Mammary epithelial cell (primary cell): ENCODE measurements at regions of chr1 and their contacts with region 1.

Region 1: GRCh38 chr1:23539698-23540266 is 8.7 kb upstream of the E2F2 start:
- DNase-seq: peak; percentile 87
- H3K4me3 ChIP-seq: no peak overlapping the region
- H3K27ac ChIP-seq: no peak overlapping the region
- H3K4me1 ChIP-seq: peaks cover 8% of the 10 kb centered on the region
- H3K27me3 ChIP-seq: no peaks in the 10 kb centered on the region
- CTCF ChIP-seq: peak; percentile 95 to 98

Region 2: DNA sequence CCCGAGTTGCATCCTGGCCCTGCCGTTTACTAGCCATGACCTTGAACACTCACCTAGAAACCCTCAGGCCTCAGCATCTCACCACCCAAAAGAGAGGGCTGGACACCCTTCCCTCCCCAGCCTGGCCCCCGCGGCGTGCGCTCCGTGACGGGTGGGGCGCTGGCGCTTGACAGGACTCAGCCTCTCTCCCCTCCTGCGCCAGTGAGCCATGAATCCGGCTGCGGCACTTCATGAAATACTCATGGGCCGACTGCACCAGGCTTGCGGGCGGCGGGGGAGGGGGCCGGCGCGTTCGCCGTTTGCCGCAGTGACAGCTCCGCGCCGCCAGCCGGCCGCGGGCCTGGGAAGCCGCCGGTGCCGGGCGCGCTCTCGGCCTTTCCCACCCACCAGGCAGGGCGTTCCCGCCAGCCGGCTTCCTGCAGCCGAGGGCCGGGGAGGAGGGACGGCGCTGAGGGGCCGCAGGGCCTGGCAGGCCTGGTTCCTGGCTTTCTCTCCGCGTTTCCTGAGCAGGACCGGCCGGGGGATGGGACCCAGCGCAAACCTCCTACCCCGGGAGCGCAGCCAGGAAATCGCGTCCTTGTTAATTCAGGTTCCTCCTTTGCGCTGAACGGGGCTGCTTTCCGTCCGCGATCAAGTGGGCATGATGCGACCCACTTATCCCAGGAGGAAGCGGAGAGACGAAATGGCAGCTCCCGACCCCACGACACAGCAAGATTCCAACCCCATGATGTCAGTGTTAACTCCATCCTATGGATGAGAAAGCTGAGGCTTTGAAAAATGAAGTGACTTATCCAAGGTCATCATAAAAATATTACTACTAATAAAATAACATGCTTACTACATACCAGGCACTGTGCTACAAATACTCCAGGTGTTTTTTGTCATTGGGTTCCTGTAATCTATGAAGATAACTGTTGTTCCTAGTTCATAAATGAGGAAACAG is 362.1 kb before region 1 on chr1:
- CTCF ChIA-PET with region 1: no interaction called
- dilution Hi-C with region 1: no loop called
- in situ Hi-C with region 1: loop called in 1 of 2 experiments (anchors 25 kb)
- intact Hi-C with region 1: no loop called
- DNase-seq: peak; percentile 69
- H3K4me3 ChIP-seq: peak overlapping the region; percentile 41 to 64 (median 52)
- H3K27ac ChIP-seq: peak overlapping the region; percentile 45
- H3K4me1 ChIP-seq: peaks cover 12% of the 10 kb centered on the region
- H3K27me3 ChIP-seq: no peaks in the 10 kb centered on the region
- CTCF ChIP-seq: no peak

Region 3: GRCh38 chr1:23344111-23344986 is 195.4 kb before region 1 on chr1 and contains the start of gene HNRNPR:
- CTCF ChIA-PET with region 1: no interaction called
- dilution Hi-C with region 1: no loop called
- in situ Hi-C with region 1: no loop called
- intact Hi-C with region 1: loop called (anchors 5 kb)
- DNase-seq: peak; percentile 100
- H3K4me3 ChIP-seq: peak within 1 kb of the TSS; percentile 78 to 89 (median 83)
- H3K27ac ChIP-seq: peak within 1 kb of the TSS; percentile 88
- H3K4me1 ChIP-seq: peaks cover 15% of the 10 kb centered on the region
- H3K27me3 ChIP-seq: no peaks in the 10 kb centered on the region
- CTCF ChIP-seq: peak in 1 of 2 donors; percentile 13
- total RNA-seq, gene HNRNPR: 35.2 to 133 TPM

Region 4: GRCh38 chr1:23489842-23490241 is 49.9 kb before region 1 on chr1:
- CTCF ChIA-PET with region 1: interaction called, 8 read pairs
- dilution Hi-C with region 1: no loop called
- in situ Hi-C with region 1: loop called (anchors 5 kb)
- intact Hi-C with region 1: no loop called
- DNase-seq: no peak
- H3K4me3 ChIP-seq: no peak overlapping the region
- H3K27ac ChIP-seq: no peak overlapping the region
- H3K4me1 ChIP-seq: no peaks in the 10 kb centered on the region
- H3K27me3 ChIP-seq: no peaks in the 10 kb centered on the region
- CTCF ChIP-seq: no peak

Region 5: DNA sequence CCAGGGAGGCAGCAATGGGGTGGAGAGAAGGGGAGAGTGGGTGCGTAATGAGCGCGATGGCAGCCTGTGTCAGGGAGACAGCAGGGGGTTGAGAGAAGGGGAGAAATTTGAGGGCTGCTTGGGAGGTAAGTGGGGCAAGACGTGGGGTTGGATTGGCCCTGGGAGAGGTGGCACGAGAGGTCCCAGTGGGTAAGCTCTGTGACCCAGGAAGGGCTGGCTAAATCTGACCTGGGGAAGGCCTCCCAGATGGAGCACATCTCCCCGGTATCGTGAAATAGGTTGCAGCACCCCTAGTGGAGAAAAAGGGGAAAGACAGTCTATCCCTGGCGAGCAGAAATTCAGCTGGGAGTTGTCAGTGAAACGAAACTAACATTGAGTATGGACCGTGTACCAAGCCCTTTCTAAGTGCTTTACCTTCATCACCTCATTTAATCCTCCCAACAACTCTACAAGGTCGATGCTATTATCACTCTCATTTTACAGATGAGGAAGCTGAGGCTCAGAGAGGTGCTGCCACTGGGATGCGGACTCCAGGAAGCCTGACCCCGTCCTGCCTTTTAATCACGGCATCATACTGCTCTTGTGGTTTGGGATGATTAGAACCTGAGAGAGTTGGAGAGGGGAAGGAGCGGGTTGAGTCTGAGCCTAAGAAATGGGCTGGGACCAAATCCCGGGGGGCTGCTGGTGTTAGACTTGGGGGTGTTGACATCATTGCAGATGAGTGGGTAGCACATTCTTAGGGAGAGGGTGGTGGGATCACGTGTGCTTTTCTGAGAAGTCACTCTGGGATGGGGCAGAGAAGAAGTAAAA is 95.3 kb after region 1 on chr1:
- CTCF ChIA-PET with region 1: interaction called, 53 read pairs
- dilution Hi-C with region 1: no loop called
- in situ Hi-C with region 1: loop called in 1 of 2 experiments (anchors 5 kb)
- intact Hi-C with region 1: loop called (anchors 1 kb)
- DNase-seq: peak; percentile 62
- H3K4me3 ChIP-seq: peak overlapping the region; percentile 5 to 19 (median 13)
- H3K27ac ChIP-seq: no peak overlapping the region
- H3K4me1 ChIP-seq: no peaks in the 10 kb centered on the region
- H3K27me3 ChIP-seq: no peaks in the 10 kb centered on the region
- CTCF ChIP-seq: peak; percentile 87 to 95

Region 6: DNA sequence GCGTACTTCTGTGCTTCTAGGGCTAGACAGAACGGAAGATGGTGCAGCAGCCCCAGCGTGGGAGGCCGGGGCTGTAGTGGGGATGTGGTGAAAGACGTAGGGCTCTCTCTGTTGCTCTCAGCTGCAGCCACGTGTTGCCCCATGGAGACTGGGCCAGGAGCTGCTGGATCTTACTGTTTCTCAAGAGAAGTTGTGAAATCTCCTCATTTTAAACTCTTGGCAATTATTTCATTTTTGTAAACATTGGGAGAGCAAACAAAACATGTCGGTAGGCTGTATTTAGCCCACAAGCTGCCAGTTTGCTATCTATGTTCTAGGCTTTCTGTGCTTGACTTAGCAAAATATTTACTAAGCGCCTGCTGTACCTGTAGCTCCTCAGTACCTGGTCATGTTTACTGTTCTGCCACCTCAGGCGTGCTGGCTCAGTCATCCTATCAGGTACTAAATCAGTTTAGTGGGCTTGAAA is 187.6 kb after region 1 on chr1:
- CTCF ChIA-PET with region 1: no interaction called
- dilution Hi-C with region 1: no loop called
- in situ Hi-C with region 1: no loop called
- intact Hi-C with region 1: no loop called
- DNase-seq: no peak
- H3K4me3 ChIP-seq: no peak overlapping the region
- H3K27ac ChIP-seq: no peak overlapping the region
- H3K4me1 ChIP-seq: peaks cover 4% of the 10 kb centered on the region
- H3K27me3 ChIP-seq: no peaks in the 10 kb centered on the region
- CTCF ChIP-seq: no peak

Region 7: GRCh38 chr1:23756676-23757075 is 216.9 kb after region 1 on chr1:
- CTCF ChIA-PET with region 1: no interaction called
- dilution Hi-C with region 1: no loop called
- in situ Hi-C with region 1: no loop called
- intact Hi-C with region 1: no loop called
- DNase-seq: peak; percentile 55
- H3K4me3 ChIP-seq: no peak overlapping the region
- H3K27ac ChIP-seq: no peak overlapping the region
- H3K4me1 ChIP-seq: peaks cover 6% of the 10 kb centered on the region
- H3K27me3 ChIP-seq: no peaks in the 10 kb centered on the region
- CTCF ChIP-seq: no peak